ENCODE measurements at regions of chr7 and their contacts with region 1.

Region 1: DNA sequence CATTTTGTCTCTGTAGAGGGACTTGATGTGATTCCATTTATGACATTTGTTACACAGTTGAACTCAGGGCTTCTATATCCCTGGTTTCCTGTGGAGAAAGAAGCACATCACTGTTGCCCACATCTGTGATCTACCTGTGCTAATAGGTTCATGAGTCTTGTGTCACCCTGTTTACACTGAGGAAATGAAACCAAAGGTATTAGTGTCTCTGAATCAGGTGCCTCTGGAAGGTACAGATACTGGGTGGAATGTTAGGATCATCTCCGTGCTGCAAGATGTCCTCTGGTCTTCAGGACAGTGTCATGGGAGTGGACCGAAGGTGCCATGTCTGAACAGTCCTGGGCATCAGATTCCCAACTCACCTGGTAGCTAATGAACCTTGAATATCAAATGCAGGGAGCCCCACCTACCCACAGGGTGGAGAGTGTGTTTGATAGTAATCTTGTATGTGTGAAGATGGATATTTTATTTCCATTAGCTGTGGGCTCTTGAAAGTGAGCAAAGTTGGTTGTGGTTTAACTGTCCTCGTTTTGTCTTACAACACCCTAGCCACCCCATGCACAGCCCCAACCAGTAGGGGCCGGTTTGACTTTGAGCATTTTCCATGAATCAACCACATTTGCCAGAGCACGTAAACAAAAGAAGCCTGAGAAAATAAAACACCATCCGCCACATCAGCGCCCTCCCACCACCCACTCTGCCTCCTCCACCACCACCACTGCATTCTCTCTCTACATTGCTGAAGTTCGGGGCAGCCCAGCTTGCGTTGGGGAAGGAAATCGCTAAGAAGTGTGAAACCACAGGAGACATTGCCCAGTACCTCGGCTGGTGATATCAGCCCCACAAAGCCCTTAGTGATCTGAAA is 40.7 kb downstream of the TARP start:
- DNase-seq: peak; percentile 93
- H3K4me3 Mint-ChIP-seq: peak overlapping the region; percentile 52
- H3K27ac Mint-ChIP-seq: peak overlapping the region; percentile 88
- H3K4me1 Mint-ChIP-seq: peaks cover 52% of the 10 kb centered on the region
- H3K27me3 Mint-ChIP-seq: no peaks in the 10 kb centered on the region

Region 2: GRCh38 chr7:37342688-37343471 is 889.9 kb before region 1 on chr7:
- intact Hi-C with region 1: loop called (anchors 10 kb)
- DNase-seq: peak; percentile 89
- H3K4me3 Mint-ChIP-seq: peak overlapping the region; percentile 92
- H3K27ac Mint-ChIP-seq: peak overlapping the region; percentile 99
- H3K4me1 Mint-ChIP-seq: peaks cover 61% of the 10 kb centered on the region
- H3K27me3 Mint-ChIP-seq: no peaks in the 10 kb centered on the region

Region 3: DNA sequence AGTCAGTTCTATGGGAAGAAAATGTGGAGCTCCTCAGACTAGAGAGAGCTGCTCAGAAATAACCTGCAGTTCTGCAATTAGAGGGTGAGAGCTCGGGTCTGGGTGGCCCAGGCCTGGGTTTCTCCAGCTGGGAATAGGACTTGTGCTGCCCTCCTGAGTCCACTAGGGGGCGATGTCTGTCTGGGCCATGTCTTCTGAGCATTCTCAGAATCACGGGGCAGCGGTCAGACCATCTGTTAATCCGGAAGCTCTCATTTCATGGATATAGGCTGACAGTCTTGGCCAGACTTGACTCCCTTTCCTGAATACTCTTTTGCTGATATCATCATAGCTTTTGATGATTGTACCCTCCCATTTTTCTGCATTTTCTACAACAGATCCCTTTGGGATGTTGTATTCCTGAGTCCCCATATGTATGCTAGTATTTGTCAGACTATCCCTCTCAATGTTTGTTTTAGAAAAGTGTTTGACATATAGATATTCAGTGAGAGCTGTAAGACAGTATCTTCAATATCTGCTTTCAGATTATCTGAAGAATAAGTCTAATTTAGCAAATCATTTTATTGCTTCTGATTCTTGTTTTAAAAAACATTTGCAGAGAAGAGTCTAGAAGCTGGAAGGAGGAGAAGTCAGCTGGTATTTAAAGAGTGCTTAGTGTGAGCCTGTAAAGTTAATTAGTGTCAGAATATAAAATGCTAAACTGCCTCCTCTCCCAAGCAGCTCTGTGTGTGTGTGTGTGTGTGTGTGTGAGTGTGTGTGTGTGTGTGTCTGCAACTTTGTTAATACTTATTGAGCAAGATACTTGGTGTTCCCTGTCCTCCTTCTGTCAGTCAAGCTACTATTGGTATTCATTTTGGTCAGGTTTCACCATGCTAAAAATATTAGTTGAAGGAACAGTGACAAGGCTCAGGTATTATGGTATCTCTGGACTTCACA is 16.7 kb before region 1 on chr7:
- intact Hi-C with region 1: loop called (anchors 1 kb)
- DNase-seq: peak; percentile 92
- H3K4me3 Mint-ChIP-seq: no peak overlapping the region
- H3K27ac Mint-ChIP-seq: no peak overlapping the region
- H3K4me1 Mint-ChIP-seq: peaks cover 38% of the 10 kb centered on the region
- H3K27me3 Mint-ChIP-seq: no peaks in the 10 kb centered on the region

Region 4: DNA sequence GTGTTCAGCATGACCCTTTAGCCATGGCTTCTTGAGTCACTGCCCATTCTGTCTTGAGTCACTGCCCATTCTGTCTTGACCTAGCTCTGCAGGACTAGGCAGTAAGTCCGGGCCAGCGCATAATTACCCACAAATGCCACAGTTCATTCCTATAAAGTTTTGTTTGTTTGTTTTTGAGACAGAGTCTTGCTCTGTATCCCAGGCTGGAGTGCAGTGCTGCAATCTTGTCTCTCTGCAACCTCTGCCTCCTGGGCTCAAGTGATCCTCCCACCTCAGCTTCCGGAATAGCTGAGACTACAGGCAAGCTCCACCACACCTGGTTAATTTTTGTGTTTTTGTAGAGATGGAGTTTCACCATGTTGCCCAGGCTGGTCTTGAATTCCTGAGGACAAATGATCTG is 73.4 kb after region 1 on chr7:
- intact Hi-C with region 1: loop called (anchors 5 kb)
- DNase-seq: no peak
- H3K4me3 Mint-ChIP-seq: no peak overlapping the region
- H3K27ac Mint-ChIP-seq: peak overlapping the region; percentile 25
- H3K4me1 Mint-ChIP-seq: peaks cover 6% of the 10 kb centered on the region
- H3K27me3 Mint-ChIP-seq: no peaks in the 10 kb centered on the region